Activated CD4-positive, alpha-beta memory T cell treated with anti-CD3 and anti-CD28 coated beads for 36 hours (primary cell): ENCODE measurements at regions of chr10 and their contacts with region 1.

Region 1: GRCh38 chr10:97731346-97732051 is 5.4 kb upstream of the ZFYVE27 start:
- DNase-seq: peak; percentile 63
- H3K4me3 Mint-ChIP-seq: no peak overlapping the region
- H3K27ac Mint-ChIP-seq: no peak overlapping the region
- H3K4me1 Mint-ChIP-seq: peaks cover 10% of the 10 kb centered on the region
- H3K27me3 Mint-ChIP-seq: peaks cover 8% of the 10 kb centered on the region

Region 2: GRCh38 chr10:97349752-97350513 is 381.6 kb before region 1 on chr10:
- CTCF ChIA-PET with region 1: no interaction called
- POLR2A ChIA-PET with region 1: no interaction called
- intact Hi-C with region 1: no loop called
- DNase-seq: no peak
- H3K4me3 Mint-ChIP-seq: no peak overlapping the region
- H3K27ac Mint-ChIP-seq: no peak overlapping the region
- H3K4me1 Mint-ChIP-seq: no peaks in the 10 kb centered on the region
- H3K27me3 Mint-ChIP-seq: no peaks in the 10 kb centered on the region

Region 3: GRCh38 chr10:97701438-97702069 is 29.9 kb before region 1 on chr10:
- CTCF ChIA-PET with region 1: interaction called, 588 read pairs
- POLR2A ChIA-PET with region 1: interaction called, 4 read pairs
- intact Hi-C with region 1: loop called (anchors 1 kb)
- DNase-seq: peak; percentile 62
- H3K4me3 Mint-ChIP-seq: no peak overlapping the region
- H3K27ac Mint-ChIP-seq: no peak overlapping the region
- H3K4me1 Mint-ChIP-seq: no peaks in the 10 kb centered on the region
- H3K27me3 Mint-ChIP-seq: peaks cover 4% of the 10 kb centered on the region